Left colon (tissue), 2 donors: ENCODE measurements at regions of chr6 and their contacts with region 1.

Region 1: GRCh38 chr6:167141667-167142432 is 15.9 kb downstream of the GPR31 start:
- DNase-seq: peak; percentile 47 to 69
- ATAC-seq: peak; percentile 98

Region 2: DNA sequence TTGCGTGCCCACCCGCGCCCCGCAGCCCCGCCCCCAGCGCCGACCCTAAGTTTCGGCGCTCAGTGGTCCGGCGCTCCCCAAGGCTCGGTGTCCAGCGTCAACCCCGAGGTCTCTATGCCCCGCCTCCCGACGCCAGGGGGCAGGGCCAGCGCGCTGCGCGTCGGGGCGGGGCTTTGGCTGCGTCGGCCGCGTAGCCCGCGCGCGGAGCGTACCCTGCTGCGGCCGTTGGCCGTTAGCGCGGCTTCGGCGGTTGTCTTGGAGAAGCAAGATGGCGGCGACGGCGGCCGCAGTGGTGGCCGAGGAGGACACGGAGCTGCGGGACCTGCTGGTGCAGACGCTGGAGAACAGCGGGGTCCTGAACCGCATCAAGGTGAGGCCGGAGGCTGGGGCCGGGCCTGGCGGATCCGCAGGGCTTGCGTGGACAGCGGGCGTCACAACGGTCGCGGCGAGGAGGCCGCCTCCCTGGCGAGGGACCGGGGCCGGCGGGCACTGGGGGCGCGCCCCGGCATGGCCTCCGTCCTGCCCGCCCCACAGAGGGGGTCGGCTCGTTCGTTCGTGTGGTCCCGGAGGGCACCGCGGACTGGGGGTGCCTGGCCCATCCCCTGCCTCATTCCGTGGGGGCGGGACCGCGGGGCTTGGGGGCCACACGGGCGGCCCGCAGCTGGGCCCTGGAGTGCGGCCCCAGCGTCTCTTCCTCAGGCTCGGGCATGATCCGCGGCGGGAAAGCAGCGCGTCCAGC is 142.5 kb before region 1 on chr6 and contains the start of gene CEP43:
- intact Hi-C with region 1: loop called in 1 of 2 experiments (anchors 5 kb)
- DNase-seq: peak; percentile 94 to 95
- ATAC-seq: peak; percentile 91
- total RNA-seq, gene CEP43: 17.4 to 22.5 TPM

Region 3: DNA sequence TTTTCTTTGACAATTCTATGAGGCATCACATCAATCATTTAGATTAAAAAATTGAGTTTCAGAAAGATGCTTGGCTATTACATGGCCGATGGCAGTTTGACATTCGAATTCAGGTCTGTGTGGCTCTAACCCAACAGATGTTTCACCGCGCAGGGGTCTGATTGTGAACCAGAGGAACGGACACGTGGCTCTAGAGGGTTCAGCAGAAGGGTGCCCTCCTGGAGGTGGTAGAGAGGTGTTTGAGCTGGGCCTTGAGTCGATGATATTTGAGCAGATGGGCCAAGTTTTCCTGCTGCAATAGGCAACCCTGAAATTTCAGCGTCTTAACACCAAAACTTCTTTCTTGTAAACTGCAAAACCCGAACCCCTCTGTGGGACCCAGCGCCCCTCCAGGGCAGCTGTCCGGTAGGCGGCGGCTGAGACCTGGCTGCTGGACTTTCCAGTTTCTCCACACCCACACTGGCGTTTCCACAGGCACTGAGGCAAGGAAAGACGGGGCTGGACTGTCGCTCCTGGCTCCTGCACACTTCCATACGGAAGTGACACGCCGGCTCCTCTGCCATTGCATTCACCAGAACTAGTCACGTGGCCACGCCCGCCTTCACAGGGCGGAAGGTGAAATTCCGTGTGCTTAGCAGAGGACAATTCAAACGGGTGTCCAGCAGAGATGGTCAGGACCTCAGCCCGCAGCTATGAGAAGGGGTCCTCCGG is 673.6 kb after region 1 on chr6:
- intact Hi-C with region 1: no loop called
- DNase-seq: peak in 1 of 2 donors; percentile 43
- ATAC-seq: no peak